ENCODE measurements at regions of chr5 and their contacts with region 1.

Region 1: GRCh38 chr5:16456103-16456832 is 9.3 kb downstream of the ZNF622 start:
- DNase-seq: peak; percentile 43
- H3K4me3 ChIP-seq: no peak overlapping the region
- H3K27ac ChIP-seq: peak overlapping the region in 1 of 2 experiments; percentile 37; a peak in 3 of 4 replicates
- H3K4me1 ChIP-seq: peaks cover 0 to 6% of the 10 kb centered on the region in 2 experiments; a peak in 2 of 4 replicates
- H3K27me3 ChIP-seq: no peaks in the 10 kb centered on the region
- CTCF ChIP-seq: peak; percentile 84
- EP300 ChIP-seq: no peak
- RAD21 ChIP-seq: peak; percentile 83

Region 2: DNA sequence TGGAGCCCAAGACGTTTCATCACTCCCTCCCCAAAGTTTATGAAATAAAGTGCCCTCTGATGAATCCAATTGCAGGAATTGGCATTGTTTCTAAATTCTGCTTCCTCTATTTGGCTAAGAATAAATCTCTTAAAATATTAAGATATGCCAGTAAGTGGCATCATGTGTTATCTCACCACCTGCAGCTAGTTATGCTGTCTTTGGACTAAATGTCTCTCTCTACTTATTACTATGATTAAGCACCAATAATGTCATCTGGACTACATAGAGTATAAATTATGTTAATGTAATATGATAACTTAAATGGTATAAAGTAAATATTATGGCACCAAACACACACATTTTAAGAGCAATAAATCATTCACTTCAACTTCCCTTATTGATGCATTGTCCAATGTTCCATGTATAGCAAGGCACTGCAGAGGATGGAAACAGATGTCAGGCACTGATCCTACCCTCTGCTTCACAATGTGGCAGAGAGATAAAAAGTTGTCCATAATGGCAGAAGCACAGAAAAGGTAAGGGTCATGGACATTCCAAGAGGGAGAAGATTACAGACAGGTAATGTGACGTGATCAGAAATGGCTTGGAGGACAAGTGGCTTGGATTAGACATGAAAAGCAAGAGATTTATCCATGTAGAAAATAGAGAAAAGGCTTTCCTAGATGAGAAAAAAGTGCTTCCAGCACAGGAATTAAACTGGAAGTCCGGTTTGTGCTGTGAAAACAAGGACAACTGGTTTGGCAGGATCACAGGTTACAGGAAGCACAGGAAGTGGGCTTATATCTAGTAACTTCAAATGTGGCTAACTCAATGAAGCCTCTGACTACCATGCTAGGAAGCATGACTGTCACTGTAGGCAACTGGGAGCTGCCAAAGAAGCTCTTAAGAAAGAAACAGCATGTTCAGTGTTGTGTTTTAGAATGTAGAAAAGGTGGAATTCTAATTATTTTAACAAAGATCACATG is 303.4 kb before region 1 on chr5:
- CTCF ChIA-PET with region 1: interaction called, 10 read pairs
- POLR2A ChIA-PET with region 1: no interaction called
- DNase-seq: peak; percentile 29
- H3K4me3 ChIP-seq: no peak overlapping the region
- H3K27ac ChIP-seq: peak overlapping the region in 1 of 2 experiments; percentile 97; a peak in 2 of 4 replicates
- H3K4me1 ChIP-seq: peaks cover 0 to 27% of the 10 kb centered on the region in 2 experiments; a peak in 2 of 4 replicates
- H3K27me3 ChIP-seq: no peaks in the 10 kb centered on the region
- CTCF ChIP-seq: no peak
- EP300 ChIP-seq: peak; percentile 25 to 97; a peak in 3 of 4 replicates
- RAD21 ChIP-seq: peak; percentile 17

Region 3: GRCh38 chr5:16160706-16161105 is 295.6 kb before region 1 on chr5:
- CTCF ChIA-PET with region 1: interaction called, 99 read pairs
- POLR2A ChIA-PET with region 1: no interaction called
- DNase-seq: no peak
- H3K4me3 ChIP-seq: no peak overlapping the region; a peak in 1 of 4 replicates
- H3K27ac ChIP-seq: peak overlapping the region in 1 of 2 experiments; percentile 82; a peak in 1 of 4 replicates
- H3K4me1 ChIP-seq: peaks cover 0 to 6% of the 10 kb centered on the region in 2 experiments; a peak in 2 of 4 replicates
- H3K27me3 ChIP-seq: no peaks in the 10 kb centered on the region
- CTCF ChIP-seq: peak; percentile 78
- EP300 ChIP-seq: no peak
- RAD21 ChIP-seq: peak; percentile 91

Region 4: GRCh38 chr5:16169550-16169949 is 286.7 kb before region 1 on chr5:
- CTCF ChIA-PET with region 1: interaction called, 96 read pairs
- POLR2A ChIA-PET with region 1: interaction called, 3 read pairs
- DNase-seq: peak; percentile 40
- H3K4me3 ChIP-seq: no peak overlapping the region; a peak in 1 of 4 replicates
- H3K27ac ChIP-seq: peak overlapping the region in 1 of 2 experiments; percentile 96; a peak in 2 of 4 replicates
- H3K4me1 ChIP-seq: peaks cover 0 to 27% of the 10 kb centered on the region in 2 experiments; a peak in 2 of 4 replicates
- H3K27me3 ChIP-seq: no peaks in the 10 kb centered on the region
- CTCF ChIP-seq: no peak
- EP300 ChIP-seq: peak; percentile 32 to 93; a peak in 3 of 4 replicates
- RAD21 ChIP-seq: peak; percentile 23; the same call in 1 of the 2 replicates

Region 5: GRCh38 chr5:16178745-16179372 is 277.4 kb before region 1 on chr5:
- CTCF ChIA-PET with region 1: interaction called, 96 read pairs
- POLR2A ChIA-PET with region 1: interaction called, 5 read pairs
- DNase-seq: peak; percentile 73
- H3K4me3 ChIP-seq: peak overlapping the region; percentile 48 to 56; a peak in 3 of 4 replicates
- H3K27ac ChIP-seq: peak overlapping the region in 1 of 2 experiments; percentile 96; a peak in 2 of 4 replicates
- H3K4me1 ChIP-seq: peaks cover 0 to 22% of the 10 kb centered on the region in 2 experiments; a peak in 2 of 4 replicates
- H3K27me3 ChIP-seq: peaks cover 6% of the 10 kb centered on the region; the same call in 1 of the 2 replicates
- CTCF ChIP-seq: 0 out of 2 replicates have a peak, but pooled peaks have one; percentile 8
- EP300 ChIP-seq: no peak
- RAD21 ChIP-seq: peak; percentile 8; the same call in 1 of the 2 replicates

Region 6: GRCh38 chr5:16418471-16418922 is 37.8 kb before region 1 on chr5:
- CTCF ChIA-PET with region 1: interaction called, 10 read pairs
- POLR2A ChIA-PET with region 1: no interaction called
- DNase-seq: peak; percentile 77
- H3K4me3 ChIP-seq: no peak overlapping the region
- H3K27ac ChIP-seq: peak overlapping the region in 1 of 2 experiments; percentile 99; a peak in 2 of 4 replicates
- H3K4me1 ChIP-seq: peaks cover 0 to 14% of the 10 kb centered on the region in 2 experiments; a peak in 2 of 4 replicates
- H3K27me3 ChIP-seq: no peaks in the 10 kb centered on the region; the same call in 1 of the 2 replicates
- CTCF ChIP-seq: no peak
- EP300 ChIP-seq: peak; percentile 51 to 99; a peak in 3 of 4 replicates
- RAD21 ChIP-seq: peak; percentile 44

Region 7: GRCh38 chr5:16471387-16471786 is 15.1 kb after region 1 on chr5:
- CTCF ChIA-PET with region 1: interaction called, 10 read pairs
- POLR2A ChIA-PET with region 1: no interaction called
- DNase-seq: no peak
- H3K4me3 ChIP-seq: no peak overlapping the region
- H3K27ac ChIP-seq: no peak overlapping the region
- H3K4me1 ChIP-seq: peaks cover 11 to 14% of the 10 kb centered on the region in 2 experiments; a peak in 3 of 4 replicates
- H3K27me3 ChIP-seq: no peaks in the 10 kb centered on the region
- CTCF ChIP-seq: no peak
- EP300 ChIP-seq: no peak
- RAD21 ChIP-seq: no peak